ENCODE measurements at regions of chr20 and their contacts with region 1.

Region 1: GRCh38 chr20:354298-355064 is 7.6 kb downstream of the NRSN2 start:
- H3K4me3 ChIP-seq: no peak overlapping the region
- H3K27ac ChIP-seq: no peak overlapping the region
- H3K4me1 ChIP-seq: no peaks in the 10 kb centered on the region
- CTCF ChIP-seq: peak; percentile 94

Region 2: DNA sequence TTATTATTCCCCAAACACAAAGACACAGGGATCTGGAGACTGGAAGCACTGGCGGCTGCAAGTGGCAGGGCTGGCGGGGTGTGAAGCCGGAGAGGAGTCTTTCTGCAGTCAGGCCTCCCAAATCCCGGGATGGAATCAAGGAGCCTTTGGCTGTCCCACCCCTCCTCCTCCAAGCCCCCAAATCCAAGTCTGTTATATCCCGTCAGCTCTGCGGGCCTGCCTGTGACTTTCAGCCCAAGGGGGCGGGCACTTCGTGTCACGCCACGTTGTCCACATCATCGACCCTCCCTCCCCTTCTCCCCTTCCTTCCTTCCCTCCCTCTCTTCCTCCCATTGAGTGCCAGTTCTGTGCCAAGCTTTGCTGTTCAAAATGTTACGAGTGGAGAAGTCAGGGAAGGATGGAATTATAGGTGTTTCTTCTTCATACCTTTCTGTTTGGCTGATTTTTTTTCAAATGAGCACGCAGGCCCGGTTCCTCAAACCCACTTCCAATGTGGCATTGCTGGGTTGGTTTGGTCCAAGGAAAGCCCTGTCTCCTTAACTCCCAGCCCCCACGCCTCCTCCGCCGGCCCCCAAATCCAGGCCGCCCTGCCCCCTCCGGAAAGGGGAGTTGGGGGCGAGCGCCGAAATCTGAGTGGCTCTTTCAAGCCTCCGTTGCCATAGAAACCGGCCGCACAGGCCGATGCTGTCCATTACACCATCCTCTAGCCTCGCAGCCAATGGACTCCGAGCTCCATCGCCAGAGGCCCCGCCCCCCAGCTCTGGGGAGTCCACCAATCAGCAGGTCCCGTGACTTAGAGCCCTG is 44.4 kb before region 1 on chr20:
- CTCF ChIA-PET with region 1: no interaction called
- POLR2A ChIA-PET with region 1: no interaction called
- H3K4me3 ChIP-seq: no peak overlapping the region
- H3K27ac ChIP-seq: 0 out of 2 replicates have a peak overlapping the region, but pooled peaks have one; percentile 16
- H3K4me1 ChIP-seq: peaks cover 6% of the 10 kb centered on the region
- CTCF ChIP-seq: no peak

Region 3: DNA sequence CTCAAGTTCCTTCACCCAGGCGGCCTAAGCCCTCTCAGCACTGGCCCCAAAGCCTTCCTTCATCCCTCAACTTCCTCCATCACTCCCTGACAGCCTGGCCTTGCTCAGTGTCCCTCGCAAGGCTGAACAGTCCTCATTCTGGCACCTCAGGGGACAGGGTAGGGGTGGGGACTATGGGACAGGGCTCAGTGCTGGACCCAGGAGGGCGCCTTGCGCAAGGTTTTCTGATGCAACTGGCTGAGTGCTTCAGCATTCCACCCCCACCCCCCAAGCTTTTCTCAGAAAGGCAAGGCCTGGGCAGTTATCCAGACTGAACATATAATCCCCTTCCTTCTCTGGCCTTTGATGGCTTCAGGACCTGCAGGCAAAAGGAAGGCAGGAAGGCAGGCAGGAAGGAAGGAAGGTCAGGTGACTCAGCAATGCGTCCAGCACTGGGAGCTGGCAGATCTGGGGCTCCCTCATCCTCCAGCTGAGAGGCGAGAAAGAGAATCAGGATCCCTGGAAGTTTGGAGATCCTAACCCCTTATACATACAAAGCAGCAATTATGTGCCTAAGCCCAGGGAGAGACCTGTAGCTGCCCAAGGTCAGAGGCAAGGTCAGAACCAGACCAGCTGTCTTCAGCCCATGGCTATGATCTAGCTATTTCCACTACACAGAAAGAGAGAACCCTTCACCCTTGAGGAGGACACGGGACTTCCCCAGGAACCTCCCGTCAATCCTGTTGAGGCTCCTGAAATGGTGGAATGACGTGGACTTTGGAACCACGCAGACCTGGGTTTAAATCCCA is 17.5 kb after region 1 on chr20:
- CTCF ChIA-PET with region 1: interaction called, 16 read pairs
- POLR2A ChIA-PET with region 1: no interaction called
- H3K4me3 ChIP-seq: no peak overlapping the region
- H3K27ac ChIP-seq: no peak overlapping the region
- H3K4me1 ChIP-seq: no peaks in the 10 kb centered on the region
- CTCF ChIP-seq: no peak

Region 4: GRCh38 chr20:431012-431904 is 76.8 kb after region 1 on chr20:
- CTCF ChIA-PET with region 1: interaction called, 88 read pairs
- POLR2A ChIA-PET with region 1: interaction called, 8 read pairs
- H3K4me3 ChIP-seq: no peak overlapping the region
- H3K27ac ChIP-seq: peak overlapping the region; percentile 41; the same call in 1 of the 2 replicates
- H3K4me1 ChIP-seq: no peaks in the 10 kb centered on the region; the same call in 1 of the 2 replicates
- CTCF ChIP-seq: peak; percentile 98

Region 5: DNA sequence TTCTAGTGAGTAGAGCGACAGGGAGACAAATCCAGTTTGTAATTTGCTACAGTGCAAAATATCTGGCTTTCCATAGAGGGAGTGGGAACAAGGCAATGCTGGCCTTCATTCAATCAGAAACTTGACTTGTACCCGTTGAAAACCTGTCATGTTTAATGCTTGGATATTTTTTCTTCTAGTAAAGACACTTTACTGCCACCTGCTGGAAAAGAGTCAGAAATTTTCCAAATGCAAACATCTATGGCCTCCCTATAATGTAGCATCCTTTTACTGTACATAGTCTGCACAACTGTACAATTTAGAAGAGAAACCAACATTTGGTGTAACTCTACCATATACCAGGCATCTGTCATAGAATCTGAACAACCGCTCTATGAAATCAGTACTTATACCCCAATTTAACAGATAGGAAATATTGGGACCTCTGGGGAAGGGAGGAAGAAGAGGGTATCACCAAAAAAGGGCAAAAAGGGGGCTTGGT is 124.5 kb after region 1 on chr20:
- CTCF ChIA-PET with region 1: interaction called, 54 read pairs
- POLR2A ChIA-PET with region 1: interaction called, 3 read pairs
- H3K4me3 ChIP-seq: no peak overlapping the region
- H3K27ac ChIP-seq: no peak overlapping the region
- H3K4me1 ChIP-seq: no peaks in the 10 kb centered on the region
- CTCF ChIP-seq: no peak

Region 6: GRCh38 chr20:492159-492558 is 137.7 kb after region 1 on chr20:
- CTCF ChIA-PET with region 1: interaction called, 19 read pairs
- POLR2A ChIA-PET with region 1: no interaction called
- H3K4me3 ChIP-seq: no peak overlapping the region
- H3K27ac ChIP-seq: no peak overlapping the region
- H3K4me1 ChIP-seq: no peaks in the 10 kb centered on the region
- CTCF ChIP-seq: no peak

Region 7: DNA sequence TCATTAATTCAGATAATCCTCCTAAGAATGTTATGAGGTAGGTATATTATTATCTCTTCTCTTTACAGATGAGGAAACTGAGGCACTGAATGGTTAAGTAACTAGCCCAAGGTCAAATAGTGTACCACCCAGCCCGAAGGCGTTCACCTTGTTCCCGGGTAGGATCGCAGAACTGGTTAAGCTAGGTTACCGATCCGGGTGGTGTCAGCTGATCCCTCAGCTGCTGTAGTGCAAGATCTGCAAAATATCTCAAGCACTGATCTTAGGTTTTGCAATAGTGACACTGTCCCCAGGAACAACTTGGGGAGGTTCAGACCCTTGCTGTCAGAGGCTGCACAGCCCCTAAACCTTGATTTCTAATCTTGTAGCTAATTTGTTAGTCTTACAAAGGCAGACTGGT is 385.7 kb after region 1 on chr20:
- CTCF ChIA-PET with region 1: interaction called, 16 read pairs
- POLR2A ChIA-PET with region 1: no interaction called
- H3K4me3 ChIP-seq: no peak overlapping the region
- H3K27ac ChIP-seq: no peak overlapping the region
- H3K4me1 ChIP-seq: no peaks in the 10 kb centered on the region
- CTCF ChIP-seq: no peak

Measured in HEK293 (cell line).